ENCODE measurements at regions of chr16 and their contacts with region 1.

Region 1: DNA sequence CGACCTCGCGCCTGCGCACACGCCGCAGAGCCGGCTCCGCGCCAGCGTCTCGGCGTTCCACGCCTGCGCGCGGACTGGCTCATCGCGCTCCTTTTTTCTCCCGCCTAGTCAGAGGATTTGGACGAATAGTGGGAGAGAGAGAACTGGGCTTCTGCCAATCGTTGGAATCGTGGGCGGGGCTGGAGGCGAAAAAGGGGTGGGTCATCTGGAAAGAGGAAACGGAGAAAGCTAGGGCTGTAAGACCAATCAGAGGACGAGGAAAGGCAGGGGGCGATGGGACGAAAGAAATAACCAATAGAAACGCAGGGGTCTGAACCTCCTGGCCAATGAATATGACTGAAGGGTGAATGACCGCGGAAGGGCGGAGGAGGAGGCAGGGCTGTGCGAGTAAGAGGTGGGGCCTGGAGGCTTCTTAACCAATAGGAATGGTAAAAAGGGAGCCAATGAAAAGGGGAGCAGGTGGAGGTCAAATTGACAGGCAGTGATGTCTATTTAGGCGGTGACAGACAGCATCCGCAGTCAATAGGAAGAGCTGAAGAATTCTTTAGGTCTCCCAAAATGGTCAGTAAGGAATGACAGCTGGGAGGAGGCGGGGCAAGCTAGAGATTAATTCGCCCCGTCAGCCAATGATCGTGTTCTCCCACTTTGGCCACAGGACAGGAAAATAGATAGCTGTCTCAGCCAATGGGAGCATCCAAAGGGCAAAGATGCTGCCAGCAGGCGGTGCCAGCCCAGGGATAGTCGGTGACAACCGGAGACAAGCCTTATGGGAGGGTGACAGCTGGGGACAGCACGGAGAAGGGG is at the start of gene TBC1D10B:
- DNase-seq: peak; percentile 100
- ATAC-seq: peak; percentile 88
- H3K4me3 ChIP-seq: peak within 1 kb of the TSS; percentile 80 to 90 (median 86)
- H3K27ac ChIP-seq: peak within 1 kb of the TSS; percentile 51
- H3K4me1 ChIP-seq: peaks cover 45% of the 10 kb centered on the region
- H3K27me3 ChIP-seq: no peaks in the 10 kb centered on the region; a peak in 1 of 5 replicates
- CTCF ChIP-seq: peak; percentile 75
- EP300 ChIP-seq: no peak
- POLR2A ChIP-seq: peak; percentile 40 to 77; a peak in 2 of 4 replicates
- RAD21 ChIP-seq: peak; percentile 71; the same call in 1 of the 2 replicates
- total RNA-seq, gene TBC1D10B: 20.8 and 24.8 TPM in 2 replicates

Region 2: GRCh38 chr16:30335598-30336474 is 34.8 kb before region 1 on chr16:
- CTCF ChIA-PET with region 1: no interaction called
- POLR2A ChIA-PET with region 1: interaction called, 26 read pairs
- in situ Hi-C with region 1: no loop called
- intact Hi-C with region 1: no loop called
- DNase-seq: peak; percentile 96
- ATAC-seq: peak; percentile 80
- H3K4me3 ChIP-seq: peak overlapping the region; percentile 68 to 95 (median 94)
- H3K27ac ChIP-seq: peak overlapping the region; percentile 99
- H3K4me1 ChIP-seq: peaks cover 51% of the 10 kb centered on the region
- H3K27me3 ChIP-seq: no peaks in the 10 kb centered on the region
- CTCF ChIP-seq: peak; percentile 56
- EP300 ChIP-seq: peak; percentile 71 to 73; a peak in 3 of 4 replicates
- POLR2A ChIP-seq: peak; percentile 76 to 84
- RAD21 ChIP-seq: no peak

Region 3: GRCh38 chr16:30346291-30346690 is 24.4 kb before region 1 on chr16:
- CTCF ChIA-PET with region 1: no interaction called
- POLR2A ChIA-PET with region 1: no interaction called
- in situ Hi-C with region 1: no loop called
- intact Hi-C with region 1: no loop called
- DNase-seq: no peak
- ATAC-seq: no peak
- H3K4me3 ChIP-seq: no peak overlapping the region
- H3K27ac ChIP-seq: no peak overlapping the region
- H3K4me1 ChIP-seq: peaks cover 9% of the 10 kb centered on the region
- H3K27me3 ChIP-seq: no peaks in the 10 kb centered on the region; a peak in 1 of 5 replicates
- CTCF ChIP-seq: no peak
- EP300 ChIP-seq: no peak
- POLR2A ChIP-seq: no peak
- RAD21 ChIP-seq: no peak

Region 4: GRCh38 chr16:30395155-30395991 is 24.7 kb after region 1 on chr16 and contains the start of gene ZNF48:
- CTCF ChIA-PET with region 1: no interaction called
- POLR2A ChIA-PET with region 1: interaction called, 32 read pairs
- in situ Hi-C with region 1: no loop called
- intact Hi-C with region 1: loop called (anchors 1 kb)
- DNase-seq: peak; percentile 89
- ATAC-seq: peak; percentile 94
- H3K4me3 ChIP-seq: peak within 1 kb of the TSS; percentile 75 to 93 (median 75)
- H3K27ac ChIP-seq: peak within 1 kb of the TSS; percentile 73
- H3K4me1 ChIP-seq: peaks cover 36% of the 10 kb centered on the region
- H3K27me3 ChIP-seq: no peaks in the 10 kb centered on the region
- CTCF ChIP-seq: peak; percentile 78
- EP300 ChIP-seq: 0 out of 4 replicates have a peak, but pooled peaks of 1 of the 2 experiments have one; percentile 19
- POLR2A ChIP-seq: peak in 1 of 2 experiments; percentile 70; a peak in 3 of 4 replicates
- RAD21 ChIP-seq: peak; percentile 92
- total RNA-seq, gene ZNF48: 10.9 and 12.3 TPM in 2 replicates

Region 5: DNA sequence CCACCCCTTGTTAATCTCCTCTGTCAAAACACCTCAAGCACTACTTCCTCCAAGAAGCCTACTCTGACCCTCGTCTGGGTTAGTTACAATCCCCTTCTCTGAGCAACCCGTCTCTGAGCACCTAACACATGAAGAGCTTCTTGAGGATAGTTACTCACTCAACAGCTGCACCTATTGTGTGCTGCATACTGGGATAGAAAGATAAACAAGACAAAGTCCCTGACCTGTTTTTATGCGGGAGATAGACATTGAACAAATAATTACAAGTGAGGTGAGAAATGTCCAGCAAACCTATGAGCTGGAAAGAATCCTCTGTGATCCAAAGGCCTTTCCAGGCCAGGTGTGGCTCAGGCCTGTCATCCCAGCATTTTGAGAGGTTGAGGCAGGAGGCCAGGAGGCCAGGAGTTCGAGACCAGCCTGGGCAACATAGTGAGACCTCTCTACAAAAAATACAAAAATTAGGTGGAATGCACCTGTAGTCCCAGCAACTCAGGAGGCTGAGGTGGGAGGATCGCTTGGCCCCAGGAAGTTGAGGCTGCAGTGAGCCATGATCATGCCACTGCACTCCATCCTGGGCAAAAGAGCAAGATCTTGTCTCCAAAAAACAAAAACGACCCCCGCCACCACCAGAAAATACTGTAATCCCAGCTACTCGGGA is 31.3 kb after region 1 on chr16:
- CTCF ChIA-PET with region 1: no interaction called
- POLR2A ChIA-PET with region 1: interaction called, 41 read pairs
- in situ Hi-C with region 1: no loop called
- intact Hi-C with region 1: loop called (anchors 1 kb)
- DNase-seq: peak; percentile 97
- ATAC-seq: peak; percentile 77
- H3K4me3 ChIP-seq: peak overlapping the region in 1 of 3 experiments; percentile 3; a peak in 2 of 6 replicates
- H3K27ac ChIP-seq: peak overlapping the region; percentile 87
- H3K4me1 ChIP-seq: peaks cover 46% of the 10 kb centered on the region
- H3K27me3 ChIP-seq: no peaks in the 10 kb centered on the region
- CTCF ChIP-seq: no peak
- EP300 ChIP-seq: peak; percentile 33 to 77; a peak in 2 of 4 replicates
- POLR2A ChIP-seq: peak; percentile 40 to 71; a peak in 3 of 4 replicates
- RAD21 ChIP-seq: peak; percentile 54; the same call in 1 of the 2 replicates

Region 6: GRCh38 chr16:30417529-30418349 is 47.1 kb after region 1 on chr16:
- CTCF ChIA-PET with region 1: no interaction called
- POLR2A ChIA-PET with region 1: no interaction called
- in situ Hi-C with region 1: no loop called
- intact Hi-C with region 1: no loop called
- DNase-seq: no peak
- ATAC-seq: peak; percentile 22; the same call in 2 of the 3 replicates
- H3K4me3 ChIP-seq: no peak overlapping the region
- H3K27ac ChIP-seq: no peak overlapping the region
- H3K4me1 ChIP-seq: 0 out of 2 replicates have a peak, but pooled peaks cover 10% of the 10 kb centered on the region
- H3K27me3 ChIP-seq: no peaks in the 10 kb centered on the region
- CTCF ChIP-seq: no peak
- EP300 ChIP-seq: no peak
- POLR2A ChIP-seq: no peak
- RAD21 ChIP-seq: no peak

Region 7: DNA sequence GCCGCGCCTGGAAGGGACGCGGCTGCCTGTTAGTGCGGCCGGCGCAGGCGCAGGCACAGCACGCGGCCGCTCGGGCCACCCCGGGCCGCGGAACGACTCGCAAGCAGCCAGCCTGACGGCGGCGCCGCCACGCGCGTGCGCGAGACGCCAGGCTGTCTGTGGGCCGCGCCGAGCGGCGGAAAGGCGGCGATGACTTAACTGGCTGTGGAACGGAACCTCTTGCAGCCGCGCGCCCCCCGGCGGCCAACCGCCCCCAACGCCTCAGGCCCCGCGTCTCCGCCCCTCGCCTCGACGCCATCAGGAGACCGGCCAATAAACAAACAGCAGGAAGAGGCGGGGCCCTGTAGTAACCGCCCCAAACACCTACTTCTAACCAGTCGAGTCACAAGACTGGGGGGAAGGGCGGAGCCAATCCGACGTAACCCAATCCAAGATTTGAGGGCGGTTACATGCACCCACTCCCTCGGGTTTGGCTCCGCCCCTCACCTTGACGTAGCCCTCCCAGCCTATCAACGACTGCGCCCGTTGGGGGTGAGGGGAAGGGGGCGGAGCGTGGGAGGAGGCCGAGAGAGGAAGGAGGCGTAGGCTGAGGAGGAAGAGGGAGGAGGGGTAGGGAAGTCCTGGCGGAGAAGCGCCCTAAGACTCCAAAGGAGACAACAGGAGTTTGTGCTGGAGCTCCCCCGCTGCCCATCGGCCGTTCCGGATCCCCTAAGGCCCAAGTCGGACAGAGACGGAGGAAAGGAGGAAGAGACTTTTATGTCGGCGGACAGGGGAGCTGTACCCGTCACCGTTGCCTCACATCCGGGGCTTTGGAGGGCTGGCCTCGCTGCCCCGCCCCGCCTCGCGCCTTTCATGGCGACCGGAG is 287.5 kb after region 1 on chr16 and contains the start of gene FBRS:
- CTCF ChIA-PET with region 1: no interaction called
- POLR2A ChIA-PET with region 1: interaction called, 10 read pairs
- in situ Hi-C with region 1: no loop called
- intact Hi-C with region 1: no loop called
- DNase-seq: peak; percentile 100
- ATAC-seq: peak; percentile 85
- H3K4me3 ChIP-seq: peak within 1 kb of the TSS; percentile 78 to 89 (median 82)
- H3K27ac ChIP-seq: peak within 1 kb of the TSS; percentile 93
- H3K4me1 ChIP-seq: peaks cover 36% of the 10 kb centered on the region
- H3K27me3 ChIP-seq: no peaks in the 10 kb centered on the region; a peak in 1 of 5 replicates
- CTCF ChIP-seq: peak; percentile 97
- EP300 ChIP-seq: peak in 1 of 2 experiments; percentile 22; a peak in 2 of 4 replicates
- POLR2A ChIP-seq: peak; percentile 76 to 86
- RAD21 ChIP-seq: peak; percentile 97
- total RNA-seq, gene FBRS: 10.1 and 16.2 TPM in 2 replicates

Region 8: GRCh38 chr16:31253642-31254045 is 883.0 kb after region 1 on chr16:
- CTCF ChIA-PET with region 1: no interaction called
- POLR2A ChIA-PET with region 1: no interaction called
- in situ Hi-C with region 1: no loop called
- intact Hi-C with region 1: no loop called
- DNase-seq: peak; percentile 23
- ATAC-seq: peak; percentile 63
- H3K4me3 ChIP-seq: no peak overlapping the region
- H3K27ac ChIP-seq: no peak overlapping the region
- H3K4me1 ChIP-seq: peaks cover 10% of the 10 kb centered on the region
- H3K27me3 ChIP-seq: no peaks in the 10 kb centered on the region; a peak in 1 of 5 replicates
- CTCF ChIP-seq: no peak
- EP300 ChIP-seq: 0 out of 4 replicates have a peak, but pooled peaks of 1 of the 2 experiments have one; percentile 16
- POLR2A ChIP-seq: no peak
- RAD21 ChIP-seq: no peak